IMR-90 (cell line): ENCODE measurements at regions of chr4 and their contacts with region 1.

Region 1: GRCh38 chr4:114087596-114088230 is 108.3 kb upstream of the ARSJ start:
- DNase-seq: peak; percentile 87
- ATAC-seq: peak; percentile 94
- H3K4me3 ChIP-seq: no peak overlapping the region
- H3K27ac ChIP-seq: peak overlapping the region; percentile 59; the same call in 1 of the 2 replicates
- H3K4me1 ChIP-seq: peaks cover 1% of the 10 kb centered on the region; the same call in 1 of the 2 replicates
- H3K27me3 ChIP-seq: no peaks in the 10 kb centered on the region
- CTCF ChIP-seq: no peak
- POLR2A ChIP-seq: no peak
- RAD21 ChIP-seq: no peak

Region 2: DNA sequence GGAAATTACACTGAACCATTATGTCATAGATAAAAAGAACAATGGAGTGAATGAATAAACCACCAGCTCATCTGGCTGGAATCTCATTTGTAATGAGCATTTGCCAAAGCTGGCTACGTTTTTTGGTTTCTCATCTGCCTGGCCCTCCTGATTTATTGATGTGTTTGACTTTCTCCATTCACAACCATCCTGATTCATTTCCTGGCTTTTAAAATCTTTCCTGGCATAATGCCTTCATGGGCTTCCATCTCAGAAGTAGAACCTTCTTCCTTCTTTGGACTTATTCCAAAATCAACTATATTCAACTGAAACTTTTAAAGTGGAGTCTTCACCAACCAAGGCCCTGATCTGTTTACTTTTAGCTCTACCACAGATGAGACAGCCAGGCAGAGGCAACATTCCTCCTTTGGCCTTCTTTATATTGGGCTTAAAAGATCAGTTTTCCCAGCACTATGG is 72.2 kb before region 1 on chr4:
- CTCF ChIA-PET with region 1: no interaction called
- POLR2A ChIA-PET with region 1: no interaction called
- dilution Hi-C with region 1: no loop called
- in situ Hi-C with region 1: no loop called
- intact Hi-C with region 1: loop called (anchors 5 kb)
- DNase-seq: peak; percentile 99
- ATAC-seq: peak; percentile 92
- H3K4me3 ChIP-seq: no peak overlapping the region
- H3K27ac ChIP-seq: no peak overlapping the region
- H3K4me1 ChIP-seq: peaks cover 2% of the 10 kb centered on the region; the same call in 1 of the 2 replicates
- H3K27me3 ChIP-seq: no peaks in the 10 kb centered on the region
- CTCF ChIP-seq: no peak
- POLR2A ChIP-seq: no peak
- RAD21 ChIP-seq: no peak; the same call in 1 of the 2 replicates

Region 3: DNA sequence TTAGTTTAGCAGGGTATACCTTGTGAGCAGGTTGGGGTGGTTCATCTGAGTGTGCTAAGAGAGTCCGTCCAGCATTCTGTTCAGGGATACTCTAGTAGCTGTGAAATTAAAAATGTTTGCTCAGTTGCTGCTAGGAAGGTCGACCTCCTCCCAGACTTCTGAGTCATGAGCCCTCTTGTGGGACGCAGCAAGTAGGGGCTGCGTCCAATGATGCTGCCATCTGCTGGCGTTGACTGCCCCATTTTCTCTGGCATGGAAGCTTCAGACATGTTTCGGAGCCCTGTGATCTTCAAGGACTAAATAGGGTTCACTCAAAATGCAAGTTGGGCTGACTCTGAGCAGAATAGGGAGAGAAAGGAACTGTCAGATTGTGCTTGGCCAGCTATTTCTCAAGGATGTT is 92.8 kb after region 1 on chr4:
- CTCF ChIA-PET with region 1: no interaction called
- POLR2A ChIA-PET with region 1: no interaction called
- dilution Hi-C with region 1: no loop called
- in situ Hi-C with region 1: no loop called
- intact Hi-C with region 1: no loop called
- DNase-seq: peak; percentile 85
- ATAC-seq: peak; percentile 95
- H3K4me3 ChIP-seq: no peak overlapping the region
- H3K27ac ChIP-seq: no peak overlapping the region
- H3K4me1 ChIP-seq: 0 out of 2 replicates have a peak, but pooled peaks cover 2% of the 10 kb centered on the region
- H3K27me3 ChIP-seq: no peaks in the 10 kb centered on the region
- CTCF ChIP-seq: peak; percentile 74
- POLR2A ChIP-seq: no peak
- RAD21 ChIP-seq: peak; percentile 76

Region 4: GRCh38 chr4:114193624-114194399 is 106.1 kb after region 1 on chr4:
- CTCF ChIA-PET with region 1: no interaction called
- POLR2A ChIA-PET with region 1: no interaction called
- dilution Hi-C with region 1: no loop called
- in situ Hi-C with region 1: no loop called
- intact Hi-C with region 1: no loop called
- DNase-seq: peak; percentile 29
- ATAC-seq: peak; percentile 60
- H3K4me3 ChIP-seq: no peak overlapping the region
- H3K27ac ChIP-seq: no peak overlapping the region
- H3K4me1 ChIP-seq: no peaks in the 10 kb centered on the region
- H3K27me3 ChIP-seq: no peaks in the 10 kb centered on the region
- CTCF ChIP-seq: no peak
- POLR2A ChIP-seq: no peak
- RAD21 ChIP-seq: no peak